PC-3 (cell line): ENCODE measurements at regions of chr10 and their contacts with region 1.

Region 1: GRCh38 chr10:52801947-52802346 is 29.4 kb upstream of the MBL2 start:
- DNase-seq: peak; percentile 100
- ATAC-seq: peak; percentile 94
- H3K4me3 ChIP-seq: peak overlapping the region; percentile 19; the same call in 1 of the 2 replicates
- H3K27ac ChIP-seq: peak overlapping the region; percentile 67
- H3K4me1 ChIP-seq: peaks cover 19% of the 10 kb centered on the region
- H3K27me3 ChIP-seq: no peaks in the 10 kb centered on the region
- CTCF ChIP-seq: no peak

Region 2: DNA sequence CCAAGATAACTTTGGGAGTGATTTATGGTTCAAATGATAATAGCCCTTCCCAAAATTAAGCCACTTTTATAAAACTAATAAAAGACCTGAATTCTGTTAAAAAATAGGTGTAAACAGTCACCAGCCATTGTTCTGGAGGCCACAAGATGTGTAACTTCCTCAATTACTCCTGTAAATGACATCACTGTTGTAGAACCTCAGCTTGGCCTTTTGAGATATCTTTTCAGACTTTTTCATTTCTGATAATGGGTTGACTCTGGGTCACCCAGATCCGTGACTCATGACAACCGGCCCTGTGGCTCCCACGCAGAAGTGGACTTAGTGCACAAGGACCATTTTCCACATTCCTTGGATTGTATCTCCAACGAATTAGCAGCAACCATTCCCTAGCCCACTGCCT is 381.3 kb before region 1 on chr10:
- CTCF ChIA-PET with region 1: no interaction called
- POLR2A ChIA-PET with region 1: no interaction called
- intact Hi-C with region 1: no loop called
- DNase-seq: no peak
- ATAC-seq: peak; percentile 34
- H3K4me3 ChIP-seq: no peak overlapping the region
- H3K27ac ChIP-seq: no peak overlapping the region
- H3K4me1 ChIP-seq: peaks cover 10% of the 10 kb centered on the region; the same call in 1 of the 2 replicates
- H3K27me3 ChIP-seq: no peaks in the 10 kb centered on the region
- CTCF ChIP-seq: no peak

Region 3: DNA sequence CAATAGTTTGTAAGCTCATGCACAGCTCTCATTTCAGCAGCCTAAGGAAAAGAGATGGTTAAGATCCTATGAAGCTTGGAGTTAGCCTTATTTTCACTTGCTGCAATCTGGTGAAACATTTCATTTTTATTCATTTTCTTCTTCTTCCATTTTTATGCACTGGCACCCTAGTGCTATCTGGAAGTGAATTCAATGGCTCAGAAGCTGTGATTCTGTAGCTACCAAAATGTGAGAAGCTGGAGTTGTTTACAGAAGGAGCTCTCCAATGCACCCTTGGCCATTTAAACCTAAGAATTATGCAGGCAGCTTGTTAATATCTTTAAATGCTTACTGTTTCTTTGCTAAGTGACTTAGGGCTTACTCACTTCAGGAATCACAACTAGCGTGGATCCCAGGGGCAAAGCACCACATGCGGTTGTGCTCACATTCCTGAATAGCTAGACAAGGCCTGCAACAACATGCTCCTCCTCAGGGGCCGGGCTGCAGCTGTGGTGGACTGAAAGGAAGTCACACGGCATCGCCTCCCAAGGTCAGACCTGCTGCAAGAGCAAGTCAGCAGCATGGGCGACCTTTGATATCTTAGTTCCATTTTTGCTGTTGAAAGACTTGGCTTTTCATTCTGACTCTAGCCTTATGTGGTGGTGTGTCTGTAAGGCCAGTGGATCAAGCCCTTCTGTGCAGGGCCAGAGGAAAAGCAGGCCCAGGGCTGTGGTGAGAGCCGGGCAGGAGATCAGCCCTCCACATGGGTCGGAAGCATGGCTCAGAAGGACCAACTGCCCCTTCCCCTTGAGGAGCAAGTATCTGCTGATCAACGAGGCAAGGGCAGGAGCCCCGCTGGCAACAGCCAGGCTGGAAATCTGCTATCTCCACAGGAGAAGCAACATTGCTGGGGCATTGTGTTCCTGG is 62.5 kb after region 1 on chr10:
- CTCF ChIA-PET with region 1: no interaction called
- POLR2A ChIA-PET with region 1: no interaction called
- intact Hi-C with region 1: loop called (anchors 5 kb)
- DNase-seq: peak; percentile 100
- ATAC-seq: peak; percentile 100
- H3K4me3 ChIP-seq: no peak overlapping the region
- H3K27ac ChIP-seq: peak overlapping the region; percentile 81
- H3K4me1 ChIP-seq: peaks cover 22% of the 10 kb centered on the region
- H3K27me3 ChIP-seq: no peaks in the 10 kb centered on the region
- CTCF ChIP-seq: no peak

Region 4: GRCh38 chr10:52951824-52952223 is 149.9 kb after region 1 on chr10:
- CTCF ChIA-PET with region 1: no interaction called
- POLR2A ChIA-PET with region 1: no interaction called
- intact Hi-C with region 1: no loop called
- DNase-seq: peak; percentile 97
- ATAC-seq: peak; percentile 44
- H3K4me3 ChIP-seq: no peak overlapping the region
- H3K27ac ChIP-seq: no peak overlapping the region
- H3K4me1 ChIP-seq: peaks cover 24% of the 10 kb centered on the region
- H3K27me3 ChIP-seq: no peaks in the 10 kb centered on the region
- CTCF ChIP-seq: peak; percentile 99

Region 5: GRCh38 chr10:53033396-53033795 is 231.4 kb after region 1 on chr10:
- CTCF ChIA-PET with region 1: no interaction called
- POLR2A ChIA-PET with region 1: no interaction called
- intact Hi-C with region 1: loop called (anchors 5 kb)
- DNase-seq: no peak
- ATAC-seq: no peak
- H3K4me3 ChIP-seq: no peak overlapping the region
- H3K27ac ChIP-seq: no peak overlapping the region
- H3K4me1 ChIP-seq: peaks cover 24% of the 10 kb centered on the region
- H3K27me3 ChIP-seq: no peaks in the 10 kb centered on the region
- CTCF ChIP-seq: no peak